Activated B cell treated with CpG ODN at 0.5 μM for 24 hours (primary cell): ENCODE measurements at regions of chr13 and their contacts with region 1.

Region 1: DNA sequence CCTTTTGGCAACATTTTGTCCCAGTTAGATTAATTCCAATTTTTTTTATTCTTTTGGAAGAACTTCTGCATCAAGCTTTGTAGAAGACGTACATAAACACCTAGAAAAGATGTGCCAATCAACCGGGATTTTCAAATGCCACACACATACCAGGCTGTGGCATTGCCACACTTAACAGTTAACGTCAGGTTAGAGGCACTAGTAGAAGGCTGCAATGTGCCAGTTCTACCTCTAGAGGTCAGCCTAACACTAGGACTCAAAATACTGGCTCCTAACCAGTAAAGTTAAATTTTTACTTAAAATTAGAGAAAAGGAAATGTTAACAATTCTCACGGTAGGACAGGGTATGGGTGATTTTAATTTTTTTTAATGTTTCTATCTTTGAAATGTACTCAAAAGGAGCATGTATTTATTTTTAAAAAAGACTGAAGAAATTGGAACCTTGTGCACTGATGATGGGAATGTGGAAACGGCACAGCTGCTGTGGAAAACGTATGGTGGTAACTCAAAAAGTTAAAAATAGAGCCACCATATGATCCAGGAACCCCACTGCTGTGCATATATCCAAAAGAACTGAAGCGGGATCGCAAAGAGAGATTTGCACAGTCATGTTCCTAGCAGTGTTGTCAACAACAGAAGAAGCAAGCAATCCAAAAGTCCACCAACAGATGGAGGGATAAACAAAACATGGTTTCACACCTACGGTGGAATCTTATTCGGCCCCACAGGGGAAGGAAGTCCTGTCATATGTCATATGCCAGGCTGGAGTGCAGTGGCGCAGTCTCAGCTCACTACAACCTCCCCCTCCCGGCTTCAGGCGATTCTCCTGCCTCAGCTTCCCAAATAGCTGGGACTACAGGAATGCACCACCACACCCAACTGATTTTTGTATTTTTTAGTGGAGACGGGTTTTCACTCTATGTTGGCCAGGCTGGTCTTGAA is 30.3 kb downstream of the CRYL1 start:
- DNase-seq: no peak
- ATAC-seq: peak; percentile 93
- H3K4me3 Mint-ChIP-seq: no peak overlapping the region
- H3K27ac Mint-ChIP-seq: no peak overlapping the region
- H3K4me1 Mint-ChIP-seq: no peaks in the 10 kb centered on the region
- H3K27me3 Mint-ChIP-seq: no peaks in the 10 kb centered on the region
- CTCF ChIP-seq: peak; percentile 82

Region 2: GRCh38 chr13:20525690-20526544 is 30.6 kb after region 1 on chr13 and contains the start of gene CRYL1:
- CTCF ChIA-PET with region 1: no interaction called
- POLR2A ChIA-PET with region 1: no interaction called
- intact Hi-C with region 1: loop called (anchors 2 kb)
- DNase-seq: peak; percentile 69
- ATAC-seq: peak; percentile 90
- H3K4me3 Mint-ChIP-seq: peak within 1 kb of the TSS; percentile 87
- H3K27ac Mint-ChIP-seq: peak within 1 kb of the TSS; percentile 79
- H3K4me1 Mint-ChIP-seq: peaks cover 16% of the 10 kb centered on the region
- H3K27me3 Mint-ChIP-seq: no peaks in the 10 kb centered on the region
- CTCF ChIP-seq: no peak
- total RNA-seq, gene CRYL1: 9.2 and 9.6 TPM in 2 replicates

Region 3: GRCh38 chr13:20566898-20567874 is 71.8 kb after region 1 on chr13 and contains the start of gene IFT88:
- CTCF ChIA-PET with region 1: no interaction called
- POLR2A ChIA-PET with region 1: no interaction called
- intact Hi-C with region 1: loop called (anchors 5 kb)
- DNase-seq: peak; percentile 92
- ATAC-seq: peak; percentile 90
- H3K4me3 Mint-ChIP-seq: peak within 1 kb of the TSS; percentile 92
- H3K27ac Mint-ChIP-seq: peak within 1 kb of the TSS; percentile 89
- H3K4me1 Mint-ChIP-seq: peaks cover 18% of the 10 kb centered on the region
- H3K27me3 Mint-ChIP-seq: no peaks in the 10 kb centered on the region
- CTCF ChIP-seq: no peak
- total RNA-seq, gene IFT88: 16.4 and 17.3 TPM in 2 replicates

Region 4: GRCh38 chr13:20607015-20607414 is 111.7 kb after region 1 on chr13:
- CTCF ChIA-PET with region 1: no interaction called
- POLR2A ChIA-PET with region 1: no interaction called
- intact Hi-C with region 1: no loop called
- DNase-seq: no peak
- ATAC-seq: no peak
- H3K4me3 Mint-ChIP-seq: no peak overlapping the region
- H3K27ac Mint-ChIP-seq: no peak overlapping the region
- H3K4me1 Mint-ChIP-seq: no peaks in the 10 kb centered on the region
- H3K27me3 Mint-ChIP-seq: no peaks in the 10 kb centered on the region
- CTCF ChIP-seq: no peak

Region 5: DNA sequence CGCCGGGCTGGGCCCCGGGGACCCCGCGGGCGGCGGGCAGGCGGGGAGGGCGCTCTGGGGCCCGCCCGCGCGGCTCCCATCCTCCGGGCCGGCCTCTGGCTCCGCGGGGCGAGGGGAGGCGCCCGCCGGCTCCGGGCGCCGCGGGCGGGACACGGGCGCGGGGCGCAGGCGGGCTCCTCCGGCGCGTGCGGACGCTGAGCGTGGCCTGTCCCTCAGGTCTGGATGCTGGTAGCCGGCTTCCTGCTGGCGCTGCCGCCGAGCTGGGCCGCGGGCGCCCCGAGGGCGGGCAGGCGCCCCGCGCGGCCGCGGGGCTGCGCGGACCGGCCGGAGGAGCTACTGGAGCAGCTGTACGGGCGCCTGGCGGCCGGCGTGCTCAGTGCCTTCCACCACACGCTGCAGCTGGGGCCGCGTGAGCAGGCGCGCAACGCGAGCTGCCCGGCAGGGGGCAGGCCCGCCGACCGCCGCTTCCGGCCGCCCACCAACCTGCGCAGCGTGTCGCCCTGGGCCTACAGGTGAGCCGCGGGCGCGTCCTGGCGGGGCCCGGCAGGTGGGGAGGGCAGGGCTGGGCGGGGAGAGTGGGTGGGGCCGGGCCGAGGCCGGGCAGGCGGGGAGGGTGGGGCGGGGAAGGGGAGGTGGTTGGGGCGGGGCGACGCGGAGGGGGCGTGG is 208.6 kb after region 1 on chr13:
- CTCF ChIA-PET with region 1: interaction called, 5 read pairs
- POLR2A ChIA-PET with region 1: no interaction called
- intact Hi-C with region 1: loop called (anchors 1 kb)
- DNase-seq: peak; percentile 72
- ATAC-seq: peak; percentile 93
- H3K4me3 Mint-ChIP-seq: no peak overlapping the region
- H3K27ac Mint-ChIP-seq: no peak overlapping the region
- H3K4me1 Mint-ChIP-seq: peaks cover 14% of the 10 kb centered on the region
- H3K27me3 Mint-ChIP-seq: peaks cover 19% of the 10 kb centered on the region
- CTCF ChIP-seq: no peak

Region 6: GRCh38 chr13:20773194-20774080 is 278.1 kb after region 1 on chr13 and contains the start of gene EEF1AKMT1:
- CTCF ChIA-PET with region 1: no interaction called
- POLR2A ChIA-PET with region 1: no interaction called
- intact Hi-C with region 1: loop called (anchors 2 kb)
- DNase-seq: peak; percentile 94
- ATAC-seq: peak; percentile 95
- H3K4me3 Mint-ChIP-seq: peak within 1 kb of the TSS; percentile 98
- H3K27ac Mint-ChIP-seq: peak within 1 kb of the TSS; percentile 99
- H3K4me1 Mint-ChIP-seq: peaks cover 21% of the 10 kb centered on the region
- H3K27me3 Mint-ChIP-seq: no peaks in the 10 kb centered on the region
- CTCF ChIP-seq: no peak
- total RNA-seq, gene EEF1AKMT1: 3.9 and 7.4 TPM in 2 replicates

Region 7: GRCh38 chr13:20843166-20843565 is 347.8 kb after region 1 on chr13:
- CTCF ChIA-PET with region 1: no interaction called
- POLR2A ChIA-PET with region 1: no interaction called
- intact Hi-C with region 1: no loop called
- DNase-seq: no peak
- ATAC-seq: no peak
- H3K4me3 Mint-ChIP-seq: no peak overlapping the region
- H3K27ac Mint-ChIP-seq: no peak overlapping the region
- H3K4me1 Mint-ChIP-seq: no peaks in the 10 kb centered on the region
- H3K27me3 Mint-ChIP-seq: no peaks in the 10 kb centered on the region
- CTCF ChIP-seq: no peak

Region 8: GRCh38 chr13:20869542-20869941 is 374.2 kb after region 1 on chr13:
- CTCF ChIA-PET with region 1: no interaction called
- POLR2A ChIA-PET with region 1: no interaction called
- intact Hi-C with region 1: no loop called
- DNase-seq: no peak
- ATAC-seq: no peak
- H3K4me3 Mint-ChIP-seq: no peak overlapping the region
- H3K27ac Mint-ChIP-seq: no peak overlapping the region
- H3K4me1 Mint-ChIP-seq: peaks cover 31% of the 10 kb centered on the region
- H3K27me3 Mint-ChIP-seq: no peaks in the 10 kb centered on the region
- CTCF ChIP-seq: no peak

Region 9: DNA sequence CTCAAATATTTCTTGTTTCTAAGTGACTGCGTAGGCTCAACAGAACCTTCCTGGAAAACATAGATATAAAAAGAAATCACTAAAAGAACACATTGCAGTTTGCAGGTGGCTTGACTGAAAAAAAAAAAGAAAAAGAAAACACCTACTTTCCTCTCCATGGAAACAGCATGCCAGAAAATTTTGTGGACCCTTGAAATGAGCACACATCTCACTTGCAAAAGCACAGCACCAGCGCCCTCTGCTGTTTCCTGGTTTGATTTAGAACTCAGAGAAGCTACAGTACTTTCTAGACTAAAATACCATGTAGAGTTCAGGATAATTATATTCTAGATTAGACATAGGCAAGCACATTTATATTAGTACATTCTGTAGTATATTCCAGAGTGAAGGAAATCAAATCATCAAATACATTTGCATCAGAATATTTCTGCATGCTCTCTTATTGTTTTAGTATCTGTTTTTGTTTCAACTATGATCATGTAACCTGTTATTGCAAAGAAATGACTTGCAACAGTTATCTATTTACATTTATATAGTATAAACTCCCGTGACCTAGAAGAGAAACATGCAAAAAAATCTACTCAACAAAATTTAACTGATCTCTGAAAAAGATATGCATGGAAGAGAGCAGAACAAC is 429.5 kb after region 1 on chr13:
- CTCF ChIA-PET with region 1: interaction called, 73 read pairs
- POLR2A ChIA-PET with region 1: no interaction called
- intact Hi-C with region 1: loop called (anchors 1 kb)
- DNase-seq: peak; percentile 24
- ATAC-seq: no peak
- H3K4me3 Mint-ChIP-seq: no peak overlapping the region
- H3K27ac Mint-ChIP-seq: no peak overlapping the region
- H3K4me1 Mint-ChIP-seq: no peaks in the 10 kb centered on the region
- H3K27me3 Mint-ChIP-seq: no peaks in the 10 kb centered on the region
- CTCF ChIP-seq: no peak